ENCODE measurements at regions of chr2 and their contacts with region 1.

Region 1: DNA sequence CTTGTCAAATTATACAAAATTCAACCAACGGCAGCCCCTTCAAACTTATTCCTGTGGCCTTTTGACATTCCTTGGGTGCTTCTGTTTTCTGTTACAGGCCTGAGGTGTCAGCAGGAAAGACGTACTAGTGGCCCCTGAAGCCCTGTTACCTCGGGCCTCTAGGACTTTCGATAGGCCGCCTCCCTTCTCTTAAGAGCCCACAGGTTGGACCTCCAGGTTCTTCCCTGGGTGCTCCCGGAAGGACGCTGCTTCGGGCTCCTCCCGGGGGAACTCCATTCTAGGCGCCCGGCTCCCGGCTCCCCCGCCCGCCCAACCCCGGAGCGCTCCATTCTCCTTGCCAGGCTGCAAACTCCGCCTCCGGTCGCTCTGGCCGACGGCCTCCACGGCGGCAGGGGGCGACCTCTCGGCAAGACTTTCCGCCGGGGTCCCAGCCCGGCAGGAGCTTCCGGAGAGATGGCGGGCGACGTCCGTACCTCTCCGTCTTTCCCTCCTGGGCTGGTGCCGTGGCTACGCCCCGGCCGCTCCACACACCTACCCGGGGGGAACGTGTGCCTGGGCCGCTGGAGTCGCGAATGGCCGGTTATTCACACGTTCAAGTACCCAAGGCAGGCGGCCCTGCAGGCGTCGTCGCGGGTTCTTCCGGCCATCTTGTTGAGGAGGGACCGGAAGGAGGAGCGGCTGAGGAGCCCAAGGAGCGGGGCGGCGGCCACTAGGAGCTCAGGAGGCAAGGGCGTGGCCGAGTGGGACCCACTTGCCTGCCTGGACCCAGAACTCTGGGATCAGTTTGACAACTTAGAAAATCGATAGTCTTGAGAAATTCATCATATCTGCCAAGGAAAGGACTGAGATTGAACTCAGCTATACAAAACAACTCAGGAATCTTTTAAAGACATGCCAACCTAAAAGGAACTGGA is 27.5 kb downstream of the BOLA3 start:
- DNase-seq: peak; percentile 90 to 95
- H3K4me3 ChIP-seq: peak overlapping the region; percentile 56
- H3K4me3 Mint-ChIP-seq: peak overlapping the region; percentile 91
- H3K27ac Mint-ChIP-seq: peak overlapping the region; percentile 98
- H3K4me1 ChIP-seq: no peaks in the 10 kb centered on the region
- H3K4me1 Mint-ChIP-seq: no peaks in the 10 kb centered on the region
- H3K27me3 ChIP-seq: no peaks in the 10 kb centered on the region
- H3K27me3 Mint-ChIP-seq: peaks cover 5% of the 10 kb centered on the region
- CTCF ChIP-seq: peak; percentile 53 to 79

Region 2: GRCh38 chr2:73926493-73927338 is 193.5 kb before region 1 on chr2 and contains the start of gene DGUOK:
- CTCF ChIA-PET with region 1: interaction called, 5 read pairs
- POLR2A ChIA-PET with region 1: no interaction called
- intact Hi-C with region 1: loop called (anchors 10 kb)
- DNase-seq: peak; percentile 97 to 98
- H3K4me3 ChIP-seq: peak within 1 kb of the TSS; percentile 84
- H3K4me3 Mint-ChIP-seq: peak within 1 kb of the TSS; percentile 89
- H3K27ac Mint-ChIP-seq: peak within 1 kb of the TSS; percentile 93
- H3K4me1 ChIP-seq: no peaks in the 10 kb centered on the region; the same call in 1 of the 2 replicates
- H3K4me1 Mint-ChIP-seq: peaks cover 21% of the 10 kb centered on the region
- H3K27me3 ChIP-seq: no peaks in the 10 kb centered on the region
- H3K27me3 Mint-ChIP-seq: no peaks in the 10 kb centered on the region
- CTCF ChIP-seq: no peak
- total RNA-seq, gene DGUOK: 69.6 and 70.7 TPM in 2 replicates

Region 3: DNA sequence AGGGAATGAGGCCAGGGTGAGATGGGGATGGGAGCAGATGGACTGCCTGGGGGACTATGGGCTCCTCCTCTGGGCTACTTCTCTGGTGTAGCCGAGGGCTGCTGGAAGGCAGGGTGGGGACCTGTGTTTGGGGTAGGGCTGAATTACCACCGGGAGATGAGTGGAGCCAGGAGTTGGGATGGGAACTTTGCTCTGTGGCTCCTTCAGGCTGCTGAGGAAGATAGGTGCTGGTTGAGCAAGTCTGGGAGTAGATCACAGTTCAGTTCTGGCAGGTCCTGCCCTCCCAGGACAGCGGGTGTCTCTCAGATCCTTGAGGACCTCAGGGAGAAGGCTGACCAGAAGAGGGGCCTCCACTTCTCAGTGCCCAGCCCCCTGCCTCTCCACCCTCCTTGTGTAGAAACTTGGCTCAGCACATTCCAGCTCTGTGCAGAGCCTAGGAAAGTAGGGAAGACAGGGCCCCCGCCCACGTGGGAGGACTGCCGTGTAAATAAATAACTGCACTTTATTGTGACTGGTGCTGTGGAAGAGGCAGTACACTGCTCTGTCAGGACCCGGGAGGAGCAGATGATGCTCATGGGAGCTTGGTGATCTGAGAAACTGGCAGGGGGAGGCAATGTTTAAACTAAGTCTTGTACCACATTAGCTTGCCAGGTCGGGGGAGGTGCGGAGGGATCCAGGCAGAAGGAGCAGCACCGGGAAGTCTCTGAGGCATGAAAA is 120.1 kb before region 1 on chr2:
- CTCF ChIA-PET with region 1: no interaction called
- POLR2A ChIA-PET with region 1: interaction called, 12 read pairs
- intact Hi-C with region 1: no loop called
- DNase-seq: peak; percentile 49 to 66
- H3K4me3 ChIP-seq: no peak overlapping the region
- H3K4me3 Mint-ChIP-seq: no peak overlapping the region
- H3K27ac Mint-ChIP-seq: peak overlapping the region; percentile 68
- H3K4me1 ChIP-seq: peaks cover 23% of the 10 kb centered on the region
- H3K4me1 Mint-ChIP-seq: peaks cover 34% of the 10 kb centered on the region
- H3K27me3 ChIP-seq: no peaks in the 10 kb centered on the region
- H3K27me3 Mint-ChIP-seq: no peaks in the 10 kb centered on the region
- CTCF ChIP-seq: no peak

Region 4: GRCh38 chr2:74099835-74100234 is 20.3 kb before region 1 on chr2:
- CTCF ChIA-PET with region 1: no interaction called
- POLR2A ChIA-PET with region 1: no interaction called
- intact Hi-C with region 1: no loop called
- DNase-seq: no peak
- H3K4me3 ChIP-seq: no peak overlapping the region
- H3K4me3 Mint-ChIP-seq: no peak overlapping the region
- H3K27ac Mint-ChIP-seq: no peak overlapping the region
- H3K4me1 ChIP-seq: no peaks in the 10 kb centered on the region
- H3K4me1 Mint-ChIP-seq: no peaks in the 10 kb centered on the region
- H3K27me3 ChIP-seq: no peaks in the 10 kb centered on the region
- H3K27me3 Mint-ChIP-seq: no peaks in the 10 kb centered on the region
- CTCF ChIP-seq: no peak

Region 5: GRCh38 chr2:74178201-74179062 is 58.3 kb after region 1 on chr2 and contains the start of gene MOB1A:
- CTCF ChIA-PET with region 1: interaction called, 8 read pairs
- POLR2A ChIA-PET with region 1: interaction called, 10 read pairs
- intact Hi-C with region 1: no loop called
- DNase-seq: peak; percentile 99 to 100
- H3K4me3 ChIP-seq: peak within 1 kb of the TSS; percentile 60
- H3K4me3 Mint-ChIP-seq: peak within 1 kb of the TSS; percentile 78
- H3K27ac Mint-ChIP-seq: peak within 1 kb of the TSS; percentile 46
- H3K4me1 ChIP-seq: 0 out of 2 replicates have a peak, but pooled peaks cover 4% of the 10 kb centered on the region
- H3K4me1 Mint-ChIP-seq: no peaks in the 10 kb centered on the region
- H3K27me3 ChIP-seq: no peaks in the 10 kb centered on the region
- H3K27me3 Mint-ChIP-seq: no peaks in the 10 kb centered on the region
- CTCF ChIP-seq: no peak
- total RNA-seq, gene MOB1A: 113 and 125 TPM in 2 replicates

Measured in Caco-2 (cell line).